ENCODE measurements at regions of chr11 and their contacts with region 1.

Region 1: GRCh38 chr11:112718483-112718882 is 242.7 kb upstream of the NCAM1 start:
- DNase-seq: no peak
- H3K4me3 ChIP-seq: no peak overlapping the region
- H3K27ac ChIP-seq: no peak overlapping the region
- H3K4me1 ChIP-seq: no peaks in the 10 kb centered on the region
- H3K27me3 ChIP-seq: peaks cover 28% of the 10 kb centered on the region
- CTCF ChIP-seq: no peak

Region 2: GRCh38 chr11:112470355-112470754 is 248.1 kb before region 1 on chr11:
- CTCF ChIA-PET with region 1: no interaction called
- POLR2A ChIA-PET with region 1: no interaction called
- intact Hi-C with region 1: no loop called
- DNase-seq: peak in 1 of 2 experiments; percentile 36
- H3K4me3 ChIP-seq: no peak overlapping the region
- H3K27ac ChIP-seq: no peak overlapping the region
- H3K4me1 ChIP-seq: peaks cover 10% of the 10 kb centered on the region
- H3K27me3 ChIP-seq: no peaks in the 10 kb centered on the region
- CTCF ChIP-seq: no peak

Region 3: GRCh38 chr11:112644410-112645131 is 73.9 kb before region 1 on chr11:
- CTCF ChIA-PET with region 1: no interaction called
- POLR2A ChIA-PET with region 1: no interaction called
- intact Hi-C with region 1: no loop called
- DNase-seq: no peak
- H3K4me3 ChIP-seq: no peak overlapping the region
- H3K27ac ChIP-seq: no peak overlapping the region
- H3K4me1 ChIP-seq: no peaks in the 10 kb centered on the region
- H3K27me3 ChIP-seq: no peaks in the 10 kb centered on the region
- CTCF ChIP-seq: no peak

Region 4: GRCh38 chr11:113077379-113077778 is 358.9 kb after region 1 on chr11:
- CTCF ChIA-PET with region 1: no interaction called
- POLR2A ChIA-PET with region 1: no interaction called
- intact Hi-C with region 1: loop called (anchors 5 kb)
- DNase-seq: no peak
- H3K4me3 ChIP-seq: no peak overlapping the region
- H3K27ac ChIP-seq: no peak overlapping the region
- H3K4me1 ChIP-seq: no peaks in the 10 kb centered on the region
- H3K27me3 ChIP-seq: no peaks in the 10 kb centered on the region; the same call in 1 of the 2 replicates
- CTCF ChIP-seq: no peak

Measured in PC-9 (cell line).